ENCODE measurements at regions of chr10 and their contacts with region 1.

Region 1: DNA sequence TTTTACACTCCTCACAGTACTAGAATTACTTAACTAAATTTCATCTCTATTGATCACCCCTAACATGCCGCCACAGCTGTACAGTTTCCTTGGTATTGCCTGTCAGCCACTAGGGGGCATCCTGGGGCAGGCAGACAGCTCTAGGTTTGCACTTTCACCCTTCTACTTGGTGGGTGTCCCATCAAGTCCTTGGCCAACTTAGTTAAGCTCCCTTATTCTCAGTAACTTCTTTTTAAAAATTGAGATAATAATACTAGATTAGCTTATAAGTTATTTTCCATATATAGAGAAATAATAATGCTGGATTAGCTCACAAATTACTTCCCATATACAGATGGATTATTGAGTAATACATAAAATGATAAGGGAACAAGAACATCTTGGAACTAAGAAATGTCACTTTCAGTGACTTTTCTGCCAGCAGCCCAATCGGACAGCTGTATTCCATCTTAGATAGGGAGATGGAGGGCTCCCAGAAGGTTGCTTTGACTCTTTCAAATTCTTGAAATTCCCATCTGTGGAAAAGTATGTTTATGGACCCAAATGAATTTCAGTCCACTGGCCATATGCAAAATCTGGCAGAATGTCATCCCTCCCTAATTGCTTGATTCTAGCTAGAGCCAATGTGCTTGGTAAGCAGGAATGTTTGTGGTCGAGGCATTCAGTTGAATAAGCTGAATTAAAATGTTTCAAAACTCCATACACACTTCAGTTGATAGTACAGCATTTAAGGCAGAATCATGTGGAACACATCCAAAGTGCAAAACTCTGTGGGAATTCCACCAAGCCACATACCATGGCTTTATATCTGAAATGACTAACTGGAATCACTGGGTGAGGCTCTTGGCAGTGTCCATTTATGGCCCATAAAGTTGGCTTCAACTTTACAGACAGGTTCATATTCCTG is 309.7 kb downstream of the CSTF2T start:
- DNase-seq: peak; percentile 2
- ATAC-seq: peak; percentile 96
- H3K4me3 ChIP-seq: no peak overlapping the region
- H3K27ac ChIP-seq: no peak overlapping the region
- H3K4me1 ChIP-seq: no peaks in the 10 kb centered on the region
- H3K27me3 ChIP-seq: no peaks in the 10 kb centered on the region
- CTCF ChIP-seq: peak; percentile 86 to 89 (median 87)
- EP300 ChIP-seq: no peak
- POLR2A ChIP-seq: no peak
- RAD21 ChIP-seq: peak; percentile 85

Region 2: GRCh38 chr10:51377932-51378599 is 11.6 kb before region 1 on chr10:
- CTCF ChIA-PET with region 1: interaction called, 15 read pairs
- POLR2A ChIA-PET with region 1: no interaction called
- RAD21 ChIA-PET with region 1: no interaction called
- SMC1A ChIA-PET with region 1: interaction called, 3 read pairs
- in situ Hi-C with region 1: no loop called
- intact Hi-C with region 1: no loop called
- DNase-seq: no peak
- ATAC-seq: no peak
- H3K4me3 ChIP-seq: no peak overlapping the region
- H3K27ac ChIP-seq: no peak overlapping the region
- H3K4me1 ChIP-seq: no peaks in the 10 kb centered on the region
- H3K27me3 ChIP-seq: no peaks in the 10 kb centered on the region
- CTCF ChIP-seq: no peak
- EP300 ChIP-seq: no peak
- POLR2A ChIP-seq: no peak
- RAD21 ChIP-seq: no peak

Region 3: GRCh38 chr10:51629934-51630639 is 240.4 kb after region 1 on chr10:
- CTCF ChIA-PET with region 1: no interaction called
- POLR2A ChIA-PET with region 1: no interaction called
- RAD21 ChIA-PET with region 1: no interaction called
- SMC1A ChIA-PET with region 1: no interaction called
- in situ Hi-C with region 1: no loop called
- intact Hi-C with region 1: no loop called
- DNase-seq: no peak
- ATAC-seq: no peak
- H3K4me3 ChIP-seq: no peak overlapping the region
- H3K27ac ChIP-seq: no peak overlapping the region
- H3K4me1 ChIP-seq: no peaks in the 10 kb centered on the region
- H3K27me3 ChIP-seq: no peaks in the 10 kb centered on the region
- CTCF ChIP-seq: no peak
- EP300 ChIP-seq: no peak
- POLR2A ChIP-seq: no peak
- RAD21 ChIP-seq: no peak

Region 4: GRCh38 chr10:51683031-51683691 is 293.5 kb after region 1 on chr10:
- CTCF ChIA-PET with region 1: no interaction called
- POLR2A ChIA-PET with region 1: no interaction called
- RAD21 ChIA-PET with region 1: no interaction called
- SMC1A ChIA-PET with region 1: no interaction called
- in situ Hi-C with region 1: no loop called
- intact Hi-C with region 1: no loop called
- DNase-seq: no peak
- ATAC-seq: no peak
- H3K4me3 ChIP-seq: no peak overlapping the region
- H3K27ac ChIP-seq: no peak overlapping the region
- H3K4me1 ChIP-seq: no peaks in the 10 kb centered on the region
- H3K27me3 ChIP-seq: no peaks in the 10 kb centered on the region
- CTCF ChIP-seq: no peak
- EP300 ChIP-seq: no peak
- POLR2A ChIP-seq: no peak
- RAD21 ChIP-seq: no peak

Region 5: DNA sequence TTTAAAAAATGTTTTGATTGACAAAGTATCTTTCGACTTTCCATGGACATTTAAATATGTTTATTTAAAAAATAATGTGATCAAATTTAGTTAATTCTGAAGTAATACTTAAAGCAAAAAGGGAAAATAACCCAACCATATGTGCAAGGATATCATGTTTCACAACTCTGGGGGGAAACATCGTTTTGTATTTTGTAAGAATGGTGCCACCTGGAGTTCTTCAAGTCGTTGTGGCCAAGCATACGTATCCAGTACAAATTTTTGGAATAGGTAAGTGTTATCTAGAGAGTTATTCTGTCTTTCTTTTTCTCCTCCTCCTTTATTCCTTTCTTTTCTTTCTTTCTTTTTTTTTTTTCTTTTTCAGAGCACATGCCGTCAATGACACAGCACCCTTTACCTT is 485.9 kb after region 1 on chr10:
- CTCF ChIA-PET with region 1: interaction called, 10 read pairs
- POLR2A ChIA-PET with region 1: no interaction called
- RAD21 ChIA-PET with region 1: no interaction called
- SMC1A ChIA-PET with region 1: interaction called, 3 read pairs
- in situ Hi-C with region 1: no loop called
- intact Hi-C with region 1: no loop called
- DNase-seq: no peak
- ATAC-seq: no peak
- H3K4me3 ChIP-seq: no peak overlapping the region
- H3K27ac ChIP-seq: no peak overlapping the region
- H3K4me1 ChIP-seq: no peaks in the 10 kb centered on the region; the same call in 1 of the 2 replicates
- H3K27me3 ChIP-seq: no peaks in the 10 kb centered on the region
- CTCF ChIP-seq: no peak
- EP300 ChIP-seq: no peak
- POLR2A ChIP-seq: no peak
- RAD21 ChIP-seq: no peak

Region 6: GRCh38 chr10:52004342-52004949 is 614.8 kb after region 1 on chr10:
- CTCF ChIA-PET with region 1: interaction called, 10 read pairs
- POLR2A ChIA-PET with region 1: no interaction called
- RAD21 ChIA-PET with region 1: interaction called, 7 read pairs
- SMC1A ChIA-PET with region 1: interaction called, 10 read pairs
- in situ Hi-C with region 1: no loop called
- intact Hi-C with region 1: loop called (anchors 1 kb)
- DNase-seq: no peak
- ATAC-seq: peak; percentile 61
- H3K4me3 ChIP-seq: no peak overlapping the region
- H3K27ac ChIP-seq: no peak overlapping the region
- H3K4me1 ChIP-seq: no peaks in the 10 kb centered on the region
- H3K27me3 ChIP-seq: no peaks in the 10 kb centered on the region
- CTCF ChIP-seq: peak; percentile 42 to 48 (median 44); a peak in 5 of 6 replicates
- EP300 ChIP-seq: no peak
- POLR2A ChIP-seq: no peak
- RAD21 ChIP-seq: peak; percentile 54